Activated naive CD4-positive, alpha-beta T cell treated with anti-CD3 and anti-CD28 coated beads for 36 hours (primary cell): ENCODE measurements at regions of chr1 and their contacts with region 1.

Region 1: GRCh38 chr1:92623187-92623778 is 136.6 kb upstream of the GFI1 start:
- DNase-seq: no peak
- H3K4me3 Mint-ChIP-seq: no peak overlapping the region
- H3K27ac Mint-ChIP-seq: no peak overlapping the region
- H3K4me1 Mint-ChIP-seq: peaks cover 16% of the 10 kb centered on the region
- H3K27me3 Mint-ChIP-seq: no peaks in the 10 kb centered on the region

Region 2: GRCh38 chr1:91997607-91998195 is 625.6 kb before region 1 on chr1:
- CTCF ChIA-PET with region 1: interaction called, 6 read pairs
- intact Hi-C with region 1: loop called (anchors 1 kb)
- DNase-seq: peak; percentile 71
- H3K4me3 Mint-ChIP-seq: no peak overlapping the region
- H3K27ac Mint-ChIP-seq: no peak overlapping the region
- H3K4me1 Mint-ChIP-seq: no peaks in the 10 kb centered on the region
- H3K27me3 Mint-ChIP-seq: no peaks in the 10 kb centered on the region

Region 3: GRCh38 chr1:92219028-92219427 is 404.3 kb before region 1 on chr1:
- CTCF ChIA-PET with region 1: no interaction called
- intact Hi-C with region 1: no loop called
- DNase-seq: no peak
- H3K4me3 Mint-ChIP-seq: no peak overlapping the region
- H3K27ac Mint-ChIP-seq: no peak overlapping the region
- H3K4me1 Mint-ChIP-seq: no peaks in the 10 kb centered on the region
- H3K27me3 Mint-ChIP-seq: no peaks in the 10 kb centered on the region

Region 4: DNA sequence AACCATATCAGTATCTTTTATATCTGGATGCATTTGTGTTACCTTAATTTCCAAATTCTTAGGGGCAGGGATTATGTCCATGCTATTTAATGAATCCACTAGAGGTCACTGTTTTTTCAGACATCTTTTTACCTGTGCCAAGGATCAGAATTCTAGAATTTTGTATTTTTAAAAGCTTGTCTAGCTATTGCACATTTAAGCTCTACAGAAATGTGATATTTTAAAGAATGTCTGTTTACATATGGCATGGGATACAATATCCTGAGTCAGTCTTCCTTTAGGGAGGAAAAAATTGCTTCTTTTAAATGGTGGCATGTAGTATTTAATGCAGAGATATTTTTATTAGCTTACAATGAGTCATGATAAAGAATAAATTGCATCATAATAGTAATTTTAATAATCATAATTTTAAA is 313.1 kb before region 1 on chr1:
- CTCF ChIA-PET with region 1: interaction called, 20 read pairs
- intact Hi-C with region 1: loop called (anchors 1 kb)
- DNase-seq: no peak
- H3K4me3 Mint-ChIP-seq: no peak overlapping the region
- H3K27ac Mint-ChIP-seq: no peak overlapping the region
- H3K4me1 Mint-ChIP-seq: peaks cover 37% of the 10 kb centered on the region
- H3K27me3 Mint-ChIP-seq: no peaks in the 10 kb centered on the region